ENCODE measurements at regions of chr7 and their contacts with region 1.

Region 1: GRCh38 chr7:129468087-129468486 is 33.9 kb downstream of the STRIP2 start:
- DNase-seq: no peak
- ATAC-seq: no peak
- H3K4me3 Mint-ChIP-seq: no peak overlapping the region
- H3K27ac Mint-ChIP-seq: no peak overlapping the region
- H3K4me1 Mint-ChIP-seq: no peaks in the 10 kb centered on the region
- H3K27me3 Mint-ChIP-seq: no peaks in the 10 kb centered on the region
- CTCF ChIP-seq: no peak

Region 2: DNA sequence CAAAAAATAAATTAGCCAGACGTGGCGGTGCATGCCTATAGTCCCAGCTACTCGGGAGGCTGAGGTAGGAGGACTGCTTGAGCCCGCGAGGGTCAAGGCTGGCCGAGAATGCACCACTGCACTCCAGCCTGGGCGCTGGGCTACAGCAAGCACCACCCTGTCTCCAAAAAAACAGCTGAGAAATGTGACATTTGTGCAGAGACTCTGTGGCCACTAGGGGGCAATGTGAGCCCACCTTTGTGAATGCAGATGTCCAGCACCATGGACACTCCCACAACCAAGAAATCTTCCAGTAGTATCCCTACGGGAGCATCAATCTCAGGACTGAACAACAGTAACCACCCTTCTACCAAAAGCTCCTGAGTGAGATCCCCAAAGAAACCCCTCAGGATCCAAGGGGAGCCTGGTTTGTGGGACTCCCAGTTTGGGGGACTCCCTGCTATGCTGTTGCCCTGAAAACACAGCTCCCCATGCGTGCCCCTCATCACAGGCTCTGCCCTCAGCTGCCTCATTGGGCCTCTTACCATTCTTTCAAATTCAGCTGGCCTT is 249.5 kb before region 1 on chr7:
- CTCF ChIA-PET with region 1: interaction called, 17 read pairs
- POLR2A ChIA-PET with region 1: no interaction called
- intact Hi-C with region 1: loop called (anchors 1 kb)
- DNase-seq: peak; percentile 61
- ATAC-seq: peak; percentile 83
- H3K4me3 Mint-ChIP-seq: no peak overlapping the region
- H3K27ac Mint-ChIP-seq: no peak overlapping the region
- H3K4me1 Mint-ChIP-seq: peaks cover 15% of the 10 kb centered on the region
- H3K27me3 Mint-ChIP-seq: no peaks in the 10 kb centered on the region
- CTCF ChIP-seq: peak; percentile 32

Region 3: DNA sequence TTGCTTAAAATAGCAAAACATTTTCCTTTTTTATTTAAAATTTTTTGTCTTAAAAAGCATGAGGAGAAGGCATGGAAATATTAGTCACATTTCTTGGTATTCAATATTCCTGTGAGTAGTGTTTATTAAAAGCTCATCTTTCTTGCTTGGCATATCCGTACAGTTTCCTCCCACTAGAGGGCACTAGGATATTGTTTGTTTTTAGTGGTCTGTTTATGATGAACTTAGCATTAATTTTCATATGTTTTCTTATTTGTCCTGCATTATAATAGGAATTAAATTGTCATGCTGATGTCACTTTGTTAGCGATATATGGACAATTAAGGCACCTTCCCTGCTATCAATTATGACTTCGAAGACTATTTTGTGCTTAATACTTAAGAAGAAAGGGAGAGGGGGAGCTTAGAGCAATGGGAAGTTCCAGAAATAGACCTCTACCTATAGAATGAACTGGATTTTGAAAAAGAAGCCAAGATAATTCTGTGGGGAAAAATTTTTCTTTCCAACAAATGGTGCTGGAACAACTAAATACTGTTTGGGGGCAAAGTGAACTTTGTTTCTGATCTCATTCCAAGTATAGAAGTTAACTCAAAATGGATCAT is 124.9 kb before region 1 on chr7:
- CTCF ChIA-PET with region 1: interaction called, 8 read pairs
- POLR2A ChIA-PET with region 1: no interaction called
- intact Hi-C with region 1: loop called (anchors 1 kb)
- DNase-seq: no peak
- ATAC-seq: no peak
- H3K4me3 Mint-ChIP-seq: no peak overlapping the region
- H3K27ac Mint-ChIP-seq: no peak overlapping the region
- H3K4me1 Mint-ChIP-seq: peaks cover 6% of the 10 kb centered on the region
- H3K27me3 Mint-ChIP-seq: no peaks in the 10 kb centered on the region
- CTCF ChIP-seq: peak; percentile 46

Region 4: GRCh38 chr7:129401967-129402860 is 65.9 kb before region 1 on chr7:
- CTCF ChIA-PET with region 1: no interaction called
- POLR2A ChIA-PET with region 1: no interaction called
- intact Hi-C with region 1: loop called (anchors 1 kb)
- DNase-seq: no peak
- ATAC-seq: no peak
- H3K4me3 Mint-ChIP-seq: no peak overlapping the region
- H3K27ac Mint-ChIP-seq: no peak overlapping the region
- H3K4me1 Mint-ChIP-seq: no peaks in the 10 kb centered on the region
- H3K27me3 Mint-ChIP-seq: no peaks in the 10 kb centered on the region
- CTCF ChIP-seq: no peak

Region 5: DNA sequence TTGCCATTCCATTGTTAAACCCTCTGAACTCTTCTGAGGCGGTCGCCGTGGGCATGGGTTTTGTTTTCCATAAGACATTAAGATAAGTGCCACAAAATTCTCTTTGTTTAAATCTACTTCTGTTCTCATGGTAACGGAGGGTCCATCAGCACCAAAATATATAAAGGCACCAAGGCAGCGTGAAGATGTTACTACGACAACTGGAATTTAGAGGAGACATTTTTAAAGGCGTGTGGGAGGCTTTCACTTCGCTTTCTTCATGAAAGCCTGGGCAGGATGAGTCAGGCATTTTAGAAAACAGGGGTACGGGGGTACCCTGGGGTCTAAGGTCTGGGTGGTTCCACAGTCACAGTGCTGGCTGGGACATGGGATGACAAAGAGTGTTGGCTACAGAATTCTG is 68.2 kb after region 1 on chr7:
- CTCF ChIA-PET with region 1: no interaction called
- POLR2A ChIA-PET with region 1: no interaction called
- intact Hi-C with region 1: no loop called
- DNase-seq: no peak
- ATAC-seq: no peak
- H3K4me3 Mint-ChIP-seq: no peak overlapping the region
- H3K27ac Mint-ChIP-seq: no peak overlapping the region
- H3K4me1 Mint-ChIP-seq: no peaks in the 10 kb centered on the region
- H3K27me3 Mint-ChIP-seq: peaks cover 2% of the 10 kb centered on the region
- CTCF ChIP-seq: no peak

Region 6: GRCh38 chr7:129635300-129636029 is 167.4 kb after region 1 on chr7:
- CTCF ChIA-PET with region 1: no interaction called
- POLR2A ChIA-PET with region 1: no interaction called
- intact Hi-C with region 1: loop called (anchors 5 kb)
- DNase-seq: peak; percentile 22
- ATAC-seq: peak; percentile 88
- H3K4me3 Mint-ChIP-seq: no peak overlapping the region
- H3K27ac Mint-ChIP-seq: no peak overlapping the region
- H3K4me1 Mint-ChIP-seq: peaks cover 16% of the 10 kb centered on the region
- H3K27me3 Mint-ChIP-seq: no peaks in the 10 kb centered on the region
- CTCF ChIP-seq: peak; percentile 22